PC-3 (cell line): ENCODE measurements at regions of chr14 and their contacts with region 1.

Region 1: GRCh38 chr14:89855961-89856656 is 98.4 kb downstream of the EFCAB11 start:
- DNase-seq: peak; percentile 73
- ATAC-seq: peak; percentile 38
- H3K4me3 ChIP-seq: no peak overlapping the region
- H3K27ac ChIP-seq: peak overlapping the region; percentile 83
- H3K4me1 ChIP-seq: peaks cover 29% of the 10 kb centered on the region
- H3K27me3 ChIP-seq: no peaks in the 10 kb centered on the region
- CTCF ChIP-seq: no peak

Region 2: GRCh38 chr14:88895116-88895515 is 961.0 kb before region 1 on chr14:
- CTCF ChIA-PET with region 1: no interaction called
- POLR2A ChIA-PET with region 1: no interaction called
- intact Hi-C with region 1: loop called (anchors 2 kb)
- DNase-seq: peak; percentile 92
- ATAC-seq: peak; percentile 95
- H3K4me3 ChIP-seq: no peak overlapping the region
- H3K27ac ChIP-seq: peak overlapping the region; percentile 71
- H3K4me1 ChIP-seq: peaks cover 25% of the 10 kb centered on the region
- H3K27me3 ChIP-seq: no peaks in the 10 kb centered on the region
- CTCF ChIP-seq: no peak

Region 3: DNA sequence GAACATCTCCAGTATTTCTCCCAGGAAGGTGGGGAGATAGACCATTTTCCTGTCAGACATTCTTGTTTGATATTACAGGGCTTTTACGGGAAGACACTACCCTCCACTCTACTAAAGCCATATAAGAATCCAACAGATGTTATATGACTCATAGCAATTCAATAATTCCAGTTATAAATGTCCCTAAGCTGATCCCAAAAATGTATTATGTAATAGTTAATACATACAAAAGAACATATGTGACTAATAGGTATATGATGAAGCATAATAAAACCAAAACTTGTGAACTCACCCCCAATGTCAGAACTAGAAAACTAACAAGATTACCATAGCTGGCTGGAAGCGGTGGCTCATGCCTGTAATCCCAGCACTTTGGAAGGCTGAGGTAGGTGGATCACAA is 14.2 kb after region 1 on chr14:
- CTCF ChIA-PET with region 1: no interaction called
- POLR2A ChIA-PET with region 1: no interaction called
- intact Hi-C with region 1: loop called (anchors 1 kb)
- DNase-seq: peak; percentile 58
- ATAC-seq: peak; percentile 70
- H3K4me3 ChIP-seq: no peak overlapping the region
- H3K27ac ChIP-seq: no peak overlapping the region
- H3K4me1 ChIP-seq: peaks cover 7% of the 10 kb centered on the region
- H3K27me3 ChIP-seq: no peaks in the 10 kb centered on the region
- CTCF ChIP-seq: no peak